CD4-positive, alpha-beta memory T cell (primary cell): ENCODE measurements at regions of chr16 and their contacts with region 1.

Region 1: DNA sequence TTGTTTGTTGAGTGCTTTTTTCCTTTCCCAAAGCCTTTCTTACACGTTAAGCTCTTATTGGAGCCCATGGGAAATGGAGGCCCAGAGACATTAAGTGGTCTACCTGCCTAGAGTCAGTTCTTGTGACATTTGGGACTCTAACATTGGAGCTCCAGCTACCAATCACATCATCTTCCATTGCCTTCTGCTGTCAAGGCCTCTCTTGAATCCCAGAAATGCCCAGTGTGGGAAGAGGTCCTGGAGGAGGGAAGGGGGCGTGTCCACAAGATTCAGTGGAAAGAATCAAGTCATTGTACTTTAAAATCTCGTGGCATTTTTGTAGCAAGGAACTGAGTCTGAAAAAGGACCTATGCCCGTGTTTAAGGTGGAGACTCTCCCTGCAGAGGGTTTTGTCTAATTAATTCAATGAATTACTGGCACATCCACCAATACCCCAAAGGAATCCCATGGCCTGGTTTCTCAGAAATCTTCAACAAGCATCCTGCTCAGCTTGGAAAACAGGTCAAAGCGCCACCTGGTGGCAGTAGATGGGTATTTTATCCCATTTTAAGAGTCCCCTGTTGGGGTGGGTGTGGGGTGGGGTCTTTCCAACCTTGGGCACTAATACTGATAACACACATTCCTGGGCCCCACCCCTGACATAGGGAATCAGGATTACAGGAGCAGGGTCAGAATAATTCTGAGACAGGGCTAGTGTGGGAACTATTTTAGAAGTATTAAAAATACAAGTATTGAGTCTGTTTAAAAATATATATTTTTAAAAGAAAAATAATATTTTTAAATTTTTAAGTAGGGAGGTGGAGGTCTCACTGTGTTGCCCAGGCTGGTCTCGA is 24.6 kb downstream of the GPT2 start:
- DNase-seq: peak; percentile 36 to 59 (median 49)
- H3K4me3 ChIP-seq: no peak overlapping the region
- H3K4me3 Mint-ChIP-seq: no peak overlapping the region
- H3K27ac ChIP-seq: no peak overlapping the region
- H3K27ac Mint-ChIP-seq: no peak overlapping the region
- H3K4me1 ChIP-seq: no peaks in the 10 kb centered on the region
- H3K4me1 Mint-ChIP-seq: peaks cover 2 to 6% (median 4%) of the 10 kb centered on the region in 4 donors
- H3K27me3 ChIP-seq: no peaks in the 10 kb centered on the region
- H3K27me3 Mint-ChIP-seq: no peaks in the 10 kb centered on the region

Region 2: DNA sequence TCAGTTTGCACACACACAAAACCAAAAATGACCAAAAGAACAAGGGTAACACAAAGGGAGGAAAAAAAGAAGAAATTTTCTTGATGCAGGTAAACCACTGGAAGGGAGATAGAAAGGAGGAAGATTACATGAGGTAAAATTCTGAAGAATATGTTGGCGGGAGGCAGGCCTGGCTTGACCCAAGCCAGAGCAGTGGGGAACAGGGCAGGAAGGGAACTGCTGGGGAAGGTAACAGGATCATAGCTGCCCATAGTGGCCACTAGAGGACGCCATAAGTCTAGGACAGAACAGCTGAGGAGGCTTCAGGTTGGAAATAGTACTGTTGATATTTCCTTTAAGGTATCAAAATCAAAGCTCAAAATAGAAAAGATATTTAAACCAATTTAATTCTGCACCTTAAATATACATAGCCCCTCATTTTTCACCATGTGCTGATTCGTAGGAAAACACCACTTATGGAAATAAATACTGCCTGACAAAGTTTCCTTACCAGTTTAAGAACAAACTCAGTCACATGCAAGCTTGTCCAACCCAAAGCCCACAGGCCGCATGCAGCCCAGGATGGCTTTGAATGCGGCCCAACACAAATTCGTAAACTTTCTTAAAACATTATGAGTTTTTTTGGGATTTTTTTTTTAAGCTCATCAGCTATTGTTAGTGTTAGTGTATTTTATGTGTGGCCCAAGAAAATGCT is 235.3 kb before region 1 on chr16:
- CTCF ChIA-PET with region 1: interaction called, 87 read pairs
- POLR2A ChIA-PET with region 1: no interaction called
- intact Hi-C with region 1: no loop called
- DNase-seq: peak; percentile 44 to 63 (median 47)
- H3K4me3 ChIP-seq: no peak overlapping the region
- H3K4me3 Mint-ChIP-seq: no peak overlapping the region
- H3K27ac ChIP-seq: no peak overlapping the region
- H3K27ac Mint-ChIP-seq: peak overlapping the region in 1 of 7 donors; percentile 35
- H3K4me1 ChIP-seq: no peaks in the 10 kb centered on the region
- H3K4me1 Mint-ChIP-seq: peaks cover 0 to 4% (median 2%) of the 10 kb centered on the region in 4 donors
- H3K27me3 ChIP-seq: no peaks in the 10 kb centered on the region
- H3K27me3 Mint-ChIP-seq: no peaks in the 10 kb centered on the region

Region 3: GRCh38 chr16:46853713-46854443 is 54.9 kb before region 1 on chr16:
- CTCF ChIA-PET with region 1: interaction called, 151 read pairs
- POLR2A ChIA-PET with region 1: interaction called, 3 read pairs
- intact Hi-C with region 1: loop called (anchors 1 kb)
- DNase-seq: peak in 4 of 5 donors; percentile 34 to 55 (median 46)
- H3K4me3 ChIP-seq: no peak overlapping the region
- H3K4me3 Mint-ChIP-seq: no peak overlapping the region
- H3K27ac ChIP-seq: no peak overlapping the region
- H3K27ac Mint-ChIP-seq: no peak overlapping the region
- H3K4me1 ChIP-seq: no peaks in the 10 kb centered on the region
- H3K4me1 Mint-ChIP-seq: peaks cover 0 to 2% (median 0%) of the 10 kb centered on the region in 4 donors
- H3K27me3 ChIP-seq: no peaks in the 10 kb centered on the region
- H3K27me3 Mint-ChIP-seq: peaks cover 1 to 7% of the 10 kb centered on the region in 2 donors

Region 4: DNA sequence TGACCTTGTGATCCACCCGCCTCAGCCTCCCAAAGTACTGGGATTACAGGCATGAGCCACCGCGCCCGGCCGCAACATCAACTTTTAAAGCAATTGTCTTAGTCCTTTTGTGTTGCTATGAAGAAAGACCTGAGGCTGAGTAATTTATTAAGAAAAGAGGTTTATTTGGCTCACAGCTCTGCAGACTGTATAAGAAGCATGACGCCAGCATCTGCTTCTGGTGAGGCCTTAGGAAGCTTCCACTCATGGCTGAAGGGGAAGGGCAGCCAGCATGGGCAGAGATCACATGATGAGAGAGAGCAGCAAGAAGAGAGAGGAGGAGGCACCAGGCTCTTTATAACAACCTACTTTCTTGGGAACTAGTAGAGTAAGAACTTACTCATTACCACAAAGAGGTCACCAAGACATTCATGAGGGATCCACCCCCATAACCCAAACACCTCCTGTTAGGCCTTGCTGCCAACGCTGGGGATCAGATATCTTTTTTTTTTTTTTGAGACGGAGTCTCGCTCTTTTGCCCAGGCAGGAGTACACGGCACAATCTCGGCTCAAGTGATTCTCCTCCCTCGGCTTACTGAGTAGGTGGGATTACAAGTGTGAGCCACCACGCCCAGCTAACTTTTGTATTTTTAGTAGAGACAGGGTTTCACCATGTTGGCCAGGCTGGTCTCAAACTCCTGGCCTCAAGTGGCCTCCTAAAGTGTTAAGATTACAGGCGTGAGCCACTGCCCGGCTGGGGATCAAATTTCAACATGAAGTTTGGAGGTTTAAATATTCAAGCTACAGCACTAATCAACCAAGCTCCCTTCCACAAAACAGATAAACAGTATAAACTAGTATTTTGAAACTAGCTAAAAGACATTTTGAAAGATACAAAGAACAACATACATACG is 46.0 kb before region 1 on chr16:
- CTCF ChIA-PET with region 1: interaction called, 13 read pairs
- POLR2A ChIA-PET with region 1: no interaction called
- intact Hi-C with region 1: no loop called
- DNase-seq: no peak
- H3K4me3 ChIP-seq: no peak overlapping the region
- H3K4me3 Mint-ChIP-seq: peak overlapping the region in 1 of 8 donors; percentile 22
- H3K27ac ChIP-seq: no peak overlapping the region
- H3K27ac Mint-ChIP-seq: peak overlapping the region in 2 of 7 donors; percentile 0 to 86
- H3K4me1 ChIP-seq: peaks cover 9% of the 10 kb centered on the region
- H3K4me1 Mint-ChIP-seq: peaks cover 4 to 21% (median 10%) of the 10 kb centered on the region in 4 donors
- H3K27me3 ChIP-seq: no peaks in the 10 kb centered on the region
- H3K27me3 Mint-ChIP-seq: peaks cover 0 to 1% of the 10 kb centered on the region in 2 donors

Region 5: GRCh38 chr16:46918861-46919792 is 10.4 kb after region 1 on chr16:
- CTCF ChIA-PET with region 1: interaction called, 18 read pairs
- POLR2A ChIA-PET with region 1: no interaction called
- intact Hi-C with region 1: no loop called
- DNase-seq: no peak
- H3K4me3 ChIP-seq: no peak overlapping the region
- H3K4me3 Mint-ChIP-seq: peak overlapping the region in 7 of 8 donors; percentile 1 to 55 (median 32)
- H3K27ac ChIP-seq: no peak overlapping the region
- H3K27ac Mint-ChIP-seq: peak overlapping the region in 1 of 7 donors; percentile 48
- H3K4me1 ChIP-seq: no peaks in the 10 kb centered on the region
- H3K4me1 Mint-ChIP-seq: peaks cover 0 to 3% (median 0%) of the 10 kb centered on the region in 4 donors
- H3K27me3 ChIP-seq: no peaks in the 10 kb centered on the region
- H3K27me3 Mint-ChIP-seq: no peaks in the 10 kb centered on the region